AG04450 (cell line): ENCODE measurements at regions of chr14 and their contacts with region 1.

Region 1: DNA sequence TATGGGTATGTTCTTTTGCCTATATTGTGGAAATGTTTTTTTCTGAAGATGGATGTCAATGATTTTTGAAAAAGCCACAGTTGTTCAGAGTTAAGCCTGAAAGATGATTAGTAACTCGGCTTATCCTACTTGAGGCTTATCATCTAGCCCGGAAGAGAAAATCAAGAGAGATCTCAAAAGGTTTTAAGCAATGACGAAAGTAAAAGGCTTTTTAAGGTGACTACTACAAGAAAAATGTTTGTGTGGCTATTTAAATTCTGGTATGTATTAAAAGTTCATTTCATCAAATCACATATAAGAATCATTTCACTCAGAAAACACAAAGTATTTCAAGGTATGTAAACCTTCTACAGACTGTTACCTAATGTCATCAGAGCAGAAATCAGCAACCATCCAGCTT is 40.2 kb downstream of the HEATR5A start:
- DNase-seq: no peak
- H3K4me3 ChIP-seq: no peak overlapping the region
- H3K27ac ChIP-seq: no peak overlapping the region
- H3K27me3 ChIP-seq: no peaks in the 10 kb centered on the region
- CTCF ChIP-seq: no peak

Region 2: GRCh38 chr14:30681752-30682355 is 698.3 kb before region 1 on chr14:
- CTCF ChIA-PET with region 1: interaction called, 13 read pairs
- POLR2A ChIA-PET with region 1: no interaction called
- DNase-seq: no peak
- H3K4me3 ChIP-seq: no peak overlapping the region
- H3K27ac ChIP-seq: no peak overlapping the region
- H3K27me3 ChIP-seq: no peaks in the 10 kb centered on the region
- CTCF ChIP-seq: peak; percentile 56

Region 3: GRCh38 chr14:31465111-31465510 is 85.0 kb after region 1 on chr14:
- CTCF ChIA-PET with region 1: no interaction called
- POLR2A ChIA-PET with region 1: no interaction called
- DNase-seq: no peak
- H3K4me3 ChIP-seq: no peak overlapping the region
- H3K27ac ChIP-seq: no peak overlapping the region
- H3K27me3 ChIP-seq: no peaks in the 10 kb centered on the region
- CTCF ChIP-seq: no peak